ENCODE measurements at regions of chr1 and their contacts with region 1.

Region 1: GRCh38 chr1:99707535-99708142 is 58.8 kb downstream of the FRRS1 start:
- DNase-seq: peak; percentile 55 to 71
- H3K4me3 ChIP-seq: no peak overlapping the region
- H3K27ac ChIP-seq: no peak overlapping the region
- H3K4me1 ChIP-seq: no peaks in the 10 kb centered on the region
- H3K27me3 ChIP-seq: no peaks in the 10 kb centered on the region
- CTCF ChIP-seq: peak; percentile 99

Region 2: GRCh38 chr1:98749152-98749756 is 958.4 kb before region 1 on chr1:
- CTCF ChIA-PET with region 1: no interaction called
- POLR2A ChIA-PET with region 1: no interaction called
- intact Hi-C with region 1: loop called (anchors 1 kb)
- DNase-seq: no peak
- H3K4me3 ChIP-seq: no peak overlapping the region
- H3K27ac ChIP-seq: no peak overlapping the region
- H3K4me1 ChIP-seq: no peaks in the 10 kb centered on the region
- H3K27me3 ChIP-seq: no peaks in the 10 kb centered on the region
- CTCF ChIP-seq: peak; percentile 77

Region 3: GRCh38 chr1:98794196-98794886 is 913.3 kb before region 1 on chr1:
- CTCF ChIA-PET with region 1: no interaction called
- POLR2A ChIA-PET with region 1: no interaction called
- intact Hi-C with region 1: loop called (anchors 1 kb)
- DNase-seq: peak; percentile 22 to 52
- H3K4me3 ChIP-seq: no peak overlapping the region
- H3K27ac ChIP-seq: no peak overlapping the region
- H3K4me1 ChIP-seq: no peaks in the 10 kb centered on the region
- H3K27me3 ChIP-seq: no peaks in the 10 kb centered on the region
- CTCF ChIP-seq: peak; percentile 82

Region 4: GRCh38 chr1:98991127-98992012 is 716.3 kb before region 1 on chr1:
- CTCF ChIA-PET with region 1: no interaction called
- POLR2A ChIA-PET with region 1: no interaction called
- intact Hi-C with region 1: loop called (anchors 5 kb)
- DNase-seq: peak in 1 of 2 experiments; percentile 37
- H3K4me3 ChIP-seq: no peak overlapping the region
- H3K27ac ChIP-seq: no peak overlapping the region
- H3K4me1 ChIP-seq: no peaks in the 10 kb centered on the region
- H3K27me3 ChIP-seq: no peaks in the 10 kb centered on the region
- CTCF ChIP-seq: peak; percentile 67

Region 5: DNA sequence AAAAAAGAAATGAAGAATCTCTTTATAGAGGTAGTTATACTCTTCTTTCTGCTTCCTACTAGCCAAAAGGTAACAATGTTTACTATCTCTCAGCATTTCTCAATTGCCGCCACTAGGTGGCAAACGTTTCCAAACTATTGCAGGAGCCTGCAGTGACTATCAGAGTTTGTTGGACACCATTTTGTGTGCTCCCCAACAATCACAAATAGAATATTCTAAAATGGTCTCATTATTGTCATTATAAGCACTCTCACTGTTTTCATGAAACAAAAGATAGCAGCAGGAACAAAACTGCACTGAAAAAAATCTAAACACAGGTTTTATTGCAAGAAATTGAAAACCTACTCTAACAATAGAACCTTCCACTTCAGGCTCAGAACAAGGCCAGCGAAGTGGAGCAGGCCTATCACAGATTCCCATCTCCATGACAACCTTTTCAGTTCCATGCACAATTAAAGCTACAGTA is 527.3 kb before region 1 on chr1:
- CTCF ChIA-PET with region 1: no interaction called
- POLR2A ChIA-PET with region 1: no interaction called
- intact Hi-C with region 1: loop called (anchors 1 kb)
- DNase-seq: peak; percentile 46 to 59
- H3K4me3 ChIP-seq: no peak overlapping the region
- H3K27ac ChIP-seq: no peak overlapping the region
- H3K4me1 ChIP-seq: no peaks in the 10 kb centered on the region
- H3K27me3 ChIP-seq: no peaks in the 10 kb centered on the region
- CTCF ChIP-seq: peak; percentile 99

Region 6: GRCh38 chr1:99481391-99481996 is 226.1 kb before region 1 on chr1:
- CTCF ChIA-PET with region 1: no interaction called
- POLR2A ChIA-PET with region 1: no interaction called
- intact Hi-C with region 1: loop called (anchors 1 kb)
- DNase-seq: peak; percentile 19 to 61
- H3K4me3 ChIP-seq: no peak overlapping the region
- H3K27ac ChIP-seq: no peak overlapping the region
- H3K4me1 ChIP-seq: no peaks in the 10 kb centered on the region
- H3K27me3 ChIP-seq: no peaks in the 10 kb centered on the region
- CTCF ChIP-seq: peak; percentile 97